Heart right ventricle (tissue), 16 donors: ENCODE measurements at regions of chr19 and their contacts with region 1.

Region 1: GRCh38 chr19:36850559-36851442 is at the start of gene ZNF345:
- DNase-seq: peak; percentile 86 to 94
- ATAC-seq: peak; percentile 96 to 98 (median 97)
- H3K4me3 ChIP-seq: peak within 1 kb of the TSS; percentile 46 to 92 (median 76)
- H3K27ac ChIP-seq: peak within 1 kb of the TSS; percentile 32 to 96 (median 92)
- H3K4me1 ChIP-seq: peaks cover 0 to 38% (median 17%) of the 10 kb centered on the region in 9 donors
- H3K27me3 ChIP-seq: no peaks in the 10 kb centered on the region
- CTCF ChIP-seq: no peak
- total RNA-seq, gene ZNF345: 2.2 to 4.5 (median 3.0) TPM

Region 2: DNA sequence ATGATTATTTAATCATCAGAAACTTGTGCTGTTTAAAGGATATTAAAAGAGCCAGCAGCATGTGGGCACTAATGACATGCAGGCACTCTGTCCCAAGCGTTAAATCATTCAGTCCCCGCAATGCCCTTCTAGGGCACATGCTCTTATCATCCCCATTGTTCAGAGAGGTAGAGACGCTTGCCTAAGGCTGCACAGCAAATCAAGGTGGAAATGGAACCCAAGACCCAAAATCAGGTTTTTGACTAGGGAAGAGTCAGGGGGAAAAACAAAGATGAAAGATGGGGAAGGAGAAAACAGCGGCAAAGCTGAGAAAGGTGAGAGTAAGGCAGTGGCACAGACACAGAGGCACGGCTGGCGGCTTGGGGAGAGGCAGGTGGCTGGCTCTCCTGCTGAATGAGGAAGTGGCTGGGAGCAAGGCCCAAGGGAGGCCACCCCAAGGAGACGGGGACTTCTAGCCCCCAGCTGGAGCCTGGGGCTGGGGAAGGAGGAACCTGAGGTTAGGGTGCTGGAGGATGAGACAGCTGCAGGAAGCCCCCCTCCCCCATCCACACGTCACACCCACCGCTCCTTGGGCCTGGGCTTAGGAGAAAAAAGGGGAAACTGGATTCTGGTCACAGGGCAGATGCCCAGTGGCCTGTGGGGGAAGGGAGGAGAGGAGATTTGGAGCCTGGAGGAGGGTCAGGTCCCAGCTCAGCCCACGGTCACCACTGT is 941.7 kb before region 1 on chr19:
- intact Hi-C with region 1: loop called in 1 of 10 experiments (anchors 5 kb)
- DNase-seq: peak; percentile 72 to 77
- ATAC-seq: peak; percentile 79 to 89 (median 84)
- H3K4me3 ChIP-seq: peak overlapping the region in 3 of 10 donors; percentile 18 to 64 (median 40)
- H3K27ac ChIP-seq: peak overlapping the region in 6 of 10 donors; percentile 48 to 96 (median 58)
- H3K4me1 ChIP-seq: peaks cover 0 to 70% (median 0%) of the 10 kb centered on the region in 9 donors
- H3K27me3 ChIP-seq: peaks cover 0 to 14% (median 0%) of the 10 kb centered on the region in 7 donors
- CTCF ChIP-seq: no peak

Region 3: GRCh38 chr19:36796076-36796992 is 54.5 kb before region 1 on chr19:
- intact Hi-C with region 1: no loop called
- DNase-seq: no peak
- ATAC-seq: no peak
- H3K4me3 ChIP-seq: peak overlapping the region; percentile 40 to 95 (median 74)
- H3K27ac ChIP-seq: peak overlapping the region in 9 of 10 donors; percentile 62 to 93 (median 80)
- H3K4me1 ChIP-seq: peaks cover 0 to 20% (median 12%) of the 10 kb centered on the region in 9 donors
- H3K27me3 ChIP-seq: no peaks in the 10 kb centered on the region
- CTCF ChIP-seq: no peak

Region 4: DNA sequence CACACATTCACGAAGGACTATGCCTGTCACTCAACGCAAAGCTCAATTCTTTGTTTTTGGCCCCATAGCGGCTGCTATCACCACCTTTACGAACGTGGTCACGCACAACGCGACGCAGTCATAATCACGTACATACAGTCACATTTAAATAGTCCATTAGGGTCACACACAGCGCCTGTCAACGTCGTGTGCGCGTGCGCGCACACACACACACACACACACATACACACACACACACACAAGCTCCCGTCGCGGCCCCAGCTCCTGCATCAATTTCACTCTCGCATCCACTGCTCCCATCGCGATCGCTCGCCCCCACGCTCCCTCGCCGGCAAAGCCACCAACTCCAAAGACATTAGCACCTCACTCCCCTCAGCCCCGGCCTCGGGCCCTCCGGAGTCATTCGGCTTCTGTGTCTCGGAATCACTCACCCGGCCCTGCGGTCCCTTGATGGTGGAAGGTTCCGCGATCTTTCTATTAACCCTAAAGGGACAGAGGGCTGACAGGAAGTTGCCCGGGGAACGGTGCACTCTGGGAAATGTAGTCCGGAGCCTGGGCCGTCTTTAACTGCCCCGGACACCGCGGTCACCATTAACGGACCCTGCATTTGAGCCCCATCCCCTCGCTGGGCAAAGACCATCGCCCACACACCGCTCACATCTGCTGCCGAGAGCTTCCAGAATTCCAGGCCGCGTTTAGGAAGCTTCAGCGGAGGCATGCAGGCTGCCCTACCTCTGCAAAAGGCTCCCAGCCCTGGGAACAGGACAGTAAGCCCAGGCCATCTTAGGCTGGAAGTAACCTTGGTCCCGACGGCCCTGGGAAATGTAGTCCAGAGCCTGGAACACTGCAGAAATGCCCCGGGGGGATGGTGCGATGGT is 12.7 kb before region 1 on chr19 and contains the start of gene ZNF790:
- intact Hi-C with region 1: loop called in 3 of 10 experiments (anchors 1 kb)
- DNase-seq: peak; percentile 85 to 93
- ATAC-seq: peak; percentile 98 to 99 (median 99)
- H3K4me3 ChIP-seq: peak within 1 kb of the TSS; percentile 56 to 80 (median 76)
- H3K27ac ChIP-seq: peak within 1 kb of the TSS; percentile 78 to 94 (median 92)
- H3K4me1 ChIP-seq: peaks cover 0 to 24% (median 14%) of the 10 kb centered on the region in 9 donors
- H3K27me3 ChIP-seq: no peaks in the 10 kb centered on the region
- CTCF ChIP-seq: no peak
- total RNA-seq, gene ZNF790: 4.5 to 11.8 (median 8.7) TPM

Region 5: GRCh38 chr19:36915992-36916830 is 65.4 kb after region 1 on chr19 and contains the starts of genes ZNF568 and ZNF829:
- intact Hi-C with region 1: loop called in 2 of 10 experiments (anchors 5 kb)
- DNase-seq: peak; percentile 90 to 93
- ATAC-seq: peak; percentile 98 to 99 (median 98)
- H3K4me3 ChIP-seq: peak within 1 kb of the TSS; percentile 53 to 97 (median 72)
- H3K27ac ChIP-seq: peak within 1 kb of the TSS; percentile 88 to 99 (median 94)
- H3K4me1 ChIP-seq: peaks cover 0 to 21% (median 11%) of the 10 kb centered on the region in 9 donors
- H3K27me3 ChIP-seq: no peaks in the 10 kb centered on the region
- CTCF ChIP-seq: peak; percentile 26 to 82 (median 67)
- total RNA-seq, gene ZNF568: 6.9 to 11.5 (median 9.1) TPM
- total RNA-seq, gene ZNF829: 1.4 to 4.1 (median 2.8) TPM